ENCODE measurements at regions of chr6 and their contacts with region 1.

Region 1: GRCh38 chr6:132948889-132949288 is 134.5 kb downstream of the RPS12 start:
- DNase-seq: no peak
- ATAC-seq: no peak
- H3K4me3 ChIP-seq: no peak overlapping the region
- H3K27ac ChIP-seq: no peak overlapping the region
- H3K4me1 ChIP-seq: no peaks in the 10 kb centered on the region
- H3K27me3 ChIP-seq: no peaks in the 10 kb centered on the region

Region 2: GRCh38 chr6:133070410-133071043 is 121.6 kb after region 1 on chr6:
- intact Hi-C with region 1: no loop called
- DNase-seq: no peak
- ATAC-seq: no peak
- H3K4me3 ChIP-seq: no peak overlapping the region
- H3K27ac ChIP-seq: no peak overlapping the region
- H3K4me1 ChIP-seq: no peaks in the 10 kb centered on the region
- H3K27me3 ChIP-seq: no peaks in the 10 kb centered on the region

Region 3: DNA sequence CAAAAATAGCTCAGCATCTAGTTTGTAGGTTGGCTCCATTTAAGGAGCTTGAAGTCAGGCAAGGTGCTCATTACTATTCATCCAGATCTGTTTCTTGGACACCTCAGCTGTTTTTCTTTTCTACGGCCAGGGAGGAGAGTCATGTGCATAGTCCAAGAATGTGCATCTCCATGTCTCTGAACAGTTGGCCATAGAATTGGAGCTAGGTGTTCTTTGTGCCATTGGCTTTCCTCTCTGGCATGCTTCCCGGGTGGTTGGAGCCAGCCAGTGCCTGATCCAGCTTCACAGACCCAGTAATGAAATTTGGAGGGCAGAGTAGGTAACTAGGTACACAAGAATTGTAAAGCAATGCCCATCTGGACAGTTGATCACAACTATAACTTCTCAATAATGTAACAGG is 313.9 kb after region 1 on chr6:
- intact Hi-C with region 1: no loop called
- DNase-seq: peak in 1 of 3 donors; percentile 53
- ATAC-seq: peak in 1 of 2 donors; percentile 72
- H3K4me3 ChIP-seq: no peak overlapping the region
- H3K27ac ChIP-seq: no peak overlapping the region
- H3K4me1 ChIP-seq: no peaks in the 10 kb centered on the region
- H3K27me3 ChIP-seq: no peaks in the 10 kb centered on the region

Region 4: DNA sequence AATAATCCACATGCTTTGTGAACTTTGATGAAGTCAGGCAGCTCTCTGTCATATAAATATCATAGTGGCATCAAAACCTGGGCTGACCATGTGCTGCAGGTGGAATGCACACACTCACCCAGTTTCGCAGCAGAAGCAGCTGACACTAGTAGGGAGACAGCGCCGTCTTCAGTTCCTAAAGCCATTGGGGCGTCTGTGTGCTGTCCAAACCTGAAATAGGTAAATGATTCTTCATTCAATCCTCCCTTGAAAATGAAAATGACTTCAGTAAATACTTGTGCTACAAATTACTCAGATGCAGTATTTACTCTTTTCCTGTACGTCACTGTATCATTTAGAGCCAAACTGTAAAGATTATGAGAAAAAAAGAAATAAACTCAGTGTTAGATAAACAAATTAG is 419.8 kb after region 1 on chr6:
- intact Hi-C with region 1: loop called in 1 of 4 experiments (anchors 10 kb)
- DNase-seq: peak in 1 of 3 donors; percentile 33
- ATAC-seq: peak; percentile 23 to 31
- H3K4me3 ChIP-seq: no peak overlapping the region
- H3K27ac ChIP-seq: no peak overlapping the region
- H3K4me1 ChIP-seq: no peaks in the 10 kb centered on the region
- H3K27me3 ChIP-seq: no peaks in the 10 kb centered on the region